CD8-positive, alpha-beta T cell (primary cell): ENCODE measurements at regions of chr6 and their contacts with region 1.

Region 1: DNA sequence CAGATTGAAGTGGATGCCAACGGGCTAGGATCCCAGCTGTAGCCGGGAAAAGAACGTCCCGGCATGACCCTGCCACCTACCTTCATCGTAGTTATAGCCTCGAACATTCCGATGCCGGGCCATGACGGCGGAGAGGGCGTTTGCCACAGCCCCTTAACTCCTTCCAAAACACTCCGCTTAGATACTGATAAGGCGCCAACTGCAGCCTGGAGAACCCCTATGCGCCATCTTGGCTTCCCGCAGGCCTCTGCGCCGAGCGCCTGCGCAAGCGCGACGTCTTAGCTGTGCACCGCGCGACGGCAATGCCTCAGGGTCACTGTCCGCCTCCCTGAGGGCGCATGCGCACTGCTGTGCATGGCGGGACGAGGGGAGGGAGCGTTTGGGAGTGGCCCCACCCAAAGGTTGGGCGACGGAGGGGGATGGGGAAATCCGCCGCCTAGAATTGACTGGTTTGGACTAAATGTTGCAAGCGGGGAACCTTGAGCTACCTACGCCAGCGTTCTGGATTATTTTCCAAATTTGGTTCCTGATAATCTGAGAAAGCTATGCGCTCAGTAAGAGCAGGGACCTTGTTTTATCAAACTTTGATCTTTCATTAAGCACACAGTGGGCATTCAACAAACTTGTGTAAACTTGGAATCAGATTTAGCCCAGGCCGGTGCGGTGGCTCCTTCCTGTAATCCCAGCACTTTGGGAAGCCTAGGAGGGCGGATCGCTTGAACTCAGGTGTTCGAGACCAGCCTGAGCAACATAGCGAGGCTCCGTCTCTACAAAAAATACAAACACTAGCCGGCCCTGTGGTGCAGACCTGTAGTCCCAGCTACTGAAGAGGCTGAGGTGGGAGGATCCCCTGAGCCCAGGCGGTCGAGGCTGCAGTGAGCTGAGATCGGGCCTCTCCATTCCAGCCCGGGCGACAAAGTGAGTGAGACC is at the start of gene HBS1L:
- DNase-seq: peak; percentile 91 to 100 (median 96)
- ATAC-seq: peak; percentile 96
- H3K4me3 ChIP-seq: peak within 1 kb of the TSS; percentile 76 to 88
- H3K4me3 Mint-ChIP-seq: peak within 1 kb of the TSS; percentile 98
- H3K27ac ChIP-seq: peak within 1 kb of the TSS; percentile 87 to 90
- H3K27ac Mint-ChIP-seq: peak within 1 kb of the TSS; percentile 99
- H3K4me1 ChIP-seq: peaks cover 25% of the 10 kb centered on the region
- H3K4me1 Mint-ChIP-seq: peaks cover 42% of the 10 kb centered on the region
- H3K27me3 ChIP-seq: no peaks in the 10 kb centered on the region
- H3K27me3 Mint-ChIP-seq: no peaks in the 10 kb centered on the region
- CTCF ChIP-seq: no peak
- total RNA-seq, gene HBS1L: 119 to 123 TPM

Region 2: DNA sequence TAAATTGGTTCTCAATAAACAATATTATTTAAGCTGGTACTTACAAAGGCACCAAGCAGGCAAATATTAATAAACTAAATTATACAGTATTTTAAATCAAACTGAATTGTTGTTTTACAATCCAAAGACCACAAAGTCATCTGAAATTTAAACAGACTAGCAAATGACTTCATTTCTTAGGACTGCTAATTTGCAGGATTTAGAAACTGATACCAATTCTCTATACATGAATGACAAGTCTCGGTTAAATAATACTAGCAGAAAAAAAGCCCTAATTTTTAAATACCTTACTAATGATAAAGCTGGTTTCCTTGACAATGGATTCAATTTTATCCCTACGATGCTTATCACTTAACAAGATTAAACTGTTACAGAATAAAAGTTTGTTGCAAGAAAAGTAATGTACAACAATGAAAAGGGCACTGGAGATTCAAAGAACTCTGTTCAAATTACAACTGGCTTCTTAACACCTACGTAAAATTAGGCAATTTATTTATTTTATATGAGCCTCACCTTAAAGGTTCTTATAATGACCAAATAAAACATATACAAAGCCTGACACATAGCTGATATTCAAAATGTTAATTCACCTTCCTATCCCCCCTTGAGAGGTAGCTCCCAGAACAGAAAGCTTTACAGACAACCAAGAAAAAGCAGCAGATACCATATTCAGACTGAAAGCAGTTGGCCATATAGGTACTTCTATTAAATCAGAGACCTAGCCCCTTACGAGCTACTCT is 33.4 kb before region 1 on chr6:
- CTCF ChIA-PET with region 1: interaction called, 3 read pairs
- POLR2A ChIA-PET with region 1: interaction called, 3 read pairs
- intact Hi-C with region 1: loop called in 1 of 2 experiments (anchors 2 kb)
- DNase-seq: no peak
- ATAC-seq: peak; percentile 23
- H3K4me3 ChIP-seq: peak overlapping the region in 1 of 2 experiments; percentile 5
- H3K4me3 Mint-ChIP-seq: peak overlapping the region; percentile 60
- H3K27ac ChIP-seq: peak overlapping the region in 1 of 2 experiments; percentile 51
- H3K27ac Mint-ChIP-seq: peak overlapping the region; percentile 85
- H3K4me1 ChIP-seq: peaks cover 69% of the 10 kb centered on the region
- H3K4me1 Mint-ChIP-seq: peaks cover 63% of the 10 kb centered on the region
- H3K27me3 ChIP-seq: no peaks in the 10 kb centered on the region
- H3K27me3 Mint-ChIP-seq: no peaks in the 10 kb centered on the region
- CTCF ChIP-seq: no peak

Region 3: DNA sequence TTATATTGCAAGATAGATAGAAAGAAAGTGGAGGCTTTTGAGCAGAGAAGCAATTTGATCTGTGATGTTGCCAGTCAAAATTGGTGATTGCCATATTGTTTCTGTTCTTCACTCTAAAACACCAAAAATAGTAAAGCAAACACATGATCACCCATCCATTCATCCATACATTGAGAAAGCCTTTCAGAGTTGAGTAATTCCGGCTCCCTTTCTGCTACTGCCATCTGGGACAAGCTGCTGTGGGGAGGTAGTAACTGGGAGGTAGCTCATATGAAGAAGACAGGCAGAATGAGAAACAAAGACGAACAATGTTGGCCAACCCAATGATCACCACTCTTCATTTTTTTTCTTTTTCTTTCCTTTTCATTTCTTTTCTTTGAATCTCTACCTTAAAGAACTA is 50.9 kb after region 1 on chr6:
- CTCF ChIA-PET with region 1: interaction called, 3 read pairs
- POLR2A ChIA-PET with region 1: interaction called, 11 read pairs
- intact Hi-C with region 1: loop called in 1 of 2 experiments (anchors 2 kb)
- DNase-seq: no peak
- ATAC-seq: no peak
- H3K4me3 ChIP-seq: no peak overlapping the region
- H3K4me3 Mint-ChIP-seq: no peak overlapping the region
- H3K27ac ChIP-seq: no peak overlapping the region
- H3K27ac Mint-ChIP-seq: peak overlapping the region; percentile 86
- H3K4me1 ChIP-seq: peaks cover 39% of the 10 kb centered on the region
- H3K4me1 Mint-ChIP-seq: peaks cover 64% of the 10 kb centered on the region
- H3K27me3 ChIP-seq: no peaks in the 10 kb centered on the region
- H3K27me3 Mint-ChIP-seq: no peaks in the 10 kb centered on the region
- CTCF ChIP-seq: no peak

Region 4: DNA sequence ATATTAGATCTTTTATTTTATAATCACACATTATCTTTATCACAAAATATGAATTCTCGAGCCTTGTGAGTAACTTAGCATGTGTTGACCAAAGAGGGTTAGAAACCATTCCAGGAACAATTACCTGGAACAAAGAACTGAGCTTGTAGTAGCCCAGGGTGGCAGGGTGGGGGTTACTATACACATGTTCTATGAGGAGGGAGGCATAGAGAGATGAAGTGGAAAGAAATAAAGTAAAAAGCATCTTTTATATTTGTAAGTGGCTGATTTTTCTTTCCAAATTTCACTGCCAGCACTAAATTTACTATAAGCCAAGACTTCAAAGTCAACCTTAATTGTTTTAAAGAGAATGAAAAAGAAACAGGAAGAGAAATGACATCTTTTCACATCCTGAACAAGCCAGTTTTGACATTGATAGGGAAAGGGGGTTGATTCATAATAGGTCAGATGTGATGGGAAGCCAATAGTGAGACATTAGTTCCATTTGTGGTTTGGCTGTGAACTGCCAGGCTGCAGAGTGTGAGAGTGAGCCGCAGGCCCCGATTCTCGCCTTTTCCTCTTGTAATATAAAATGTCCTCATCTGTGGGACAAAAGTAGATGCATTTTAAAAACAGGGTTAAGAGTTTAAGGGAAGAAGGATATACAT is 73.6 kb after region 1 on chr6:
- CTCF ChIA-PET with region 1: no interaction called
- POLR2A ChIA-PET with region 1: interaction called, 9 read pairs
- intact Hi-C with region 1: loop called (anchors 2 to 5 kb)
- DNase-seq: peak in 7 of 9 experiments; percentile 36 to 89 (median 54)
- ATAC-seq: peak; percentile 92
- H3K4me3 ChIP-seq: peak overlapping the region in 1 of 2 experiments; percentile 9
- H3K4me3 Mint-ChIP-seq: peak overlapping the region; percentile 59
- H3K27ac ChIP-seq: peak overlapping the region; percentile 25 to 81
- H3K27ac Mint-ChIP-seq: peak overlapping the region; percentile 95
- H3K4me1 ChIP-seq: peaks cover 25% of the 10 kb centered on the region
- H3K4me1 Mint-ChIP-seq: peaks cover 42% of the 10 kb centered on the region
- H3K27me3 ChIP-seq: no peaks in the 10 kb centered on the region
- H3K27me3 Mint-ChIP-seq: no peaks in the 10 kb centered on the region
- CTCF ChIP-seq: no peak